ENCODE measurements at regions of chr18 and their contacts with region 1.

Region 1: GRCh38 chr18:54224379-54225014 is at the start of gene MBD2:
- DNase-seq: peak; percentile 98
- H3K4me3 ChIP-seq: peak within 1 kb of the TSS; percentile 63 to 79 (median 73)
- H3K27ac ChIP-seq: peak within 1 kb of the TSS; percentile 82
- H3K4me1 ChIP-seq: peaks cover 23% of the 10 kb centered on the region
- H3K27me3 ChIP-seq: no peaks in the 10 kb centered on the region
- CTCF ChIP-seq: peak in 1 of 2 donors; percentile 16
- POLR2A ChIP-seq: peak; percentile 55
- total RNA-seq, gene MBD2: 105 and 110 TPM in 2 replicates

Region 2: DNA sequence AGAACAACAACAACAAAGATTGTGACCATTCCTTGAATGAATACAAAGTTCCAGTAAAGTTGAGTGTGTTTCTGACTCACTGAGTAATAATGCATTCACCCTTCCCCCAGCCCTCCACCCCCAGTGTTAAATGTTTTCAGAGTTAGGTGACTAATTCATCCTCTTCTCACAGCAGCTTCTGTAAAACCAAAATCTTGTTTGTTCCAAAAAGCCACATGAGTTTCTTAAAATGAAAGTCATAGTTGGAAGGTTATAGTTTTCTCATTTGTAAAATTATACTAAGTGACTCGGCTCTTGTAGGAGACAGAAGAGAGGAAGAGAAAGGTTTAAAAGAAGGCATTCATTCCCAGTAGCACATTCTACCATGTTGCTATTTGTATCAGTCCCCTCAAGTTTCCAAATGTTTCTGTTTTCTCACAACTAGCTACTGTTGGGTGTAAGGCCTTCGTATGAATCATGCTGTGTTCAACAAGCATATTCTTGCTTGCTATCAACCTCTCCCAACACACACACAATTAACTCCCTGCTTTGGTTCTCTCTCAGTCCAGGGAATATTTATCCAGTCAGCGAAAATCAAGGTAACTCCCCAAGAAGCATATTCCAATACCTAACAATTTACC is 75.3 kb before region 1 on chr18:
- CTCF ChIA-PET with region 1: no interaction called
- POLR2A ChIA-PET with region 1: no interaction called
- dilution Hi-C with region 1: no loop called
- intact Hi-C with region 1: loop called (anchors 1 kb)
- DNase-seq: peak; percentile 94
- H3K4me3 ChIP-seq: peak overlapping the region in 1 of 3 experiments; percentile 50
- H3K27ac ChIP-seq: peak overlapping the region; percentile 98
- H3K4me1 ChIP-seq: peaks cover 26% of the 10 kb centered on the region
- H3K27me3 ChIP-seq: no peaks in the 10 kb centered on the region
- CTCF ChIP-seq: no peak
- POLR2A ChIP-seq: no peak

Region 3: GRCh38 chr18:54251606-54252407 is 27.3 kb after region 1 on chr18:
- CTCF ChIA-PET with region 1: interaction called, 4 read pairs
- POLR2A ChIA-PET with region 1: no interaction called
- dilution Hi-C with region 1: no loop called
- intact Hi-C with region 1: loop called (anchors 1 kb)
- DNase-seq: peak; percentile 46
- H3K4me3 ChIP-seq: no peak overlapping the region
- H3K27ac ChIP-seq: peak overlapping the region; percentile 41
- H3K4me1 ChIP-seq: peaks cover 20% of the 10 kb centered on the region
- H3K27me3 ChIP-seq: no peaks in the 10 kb centered on the region
- CTCF ChIP-seq: no peak
- POLR2A ChIP-seq: no peak

Region 4: GRCh38 chr18:54357660-54358494 is 133.4 kb after region 1 on chr18 and contains the starts of genes C18orf54 and STARD6:
- CTCF ChIA-PET with region 1: interaction called, 8 read pairs
- POLR2A ChIA-PET with region 1: no interaction called
- dilution Hi-C with region 1: no loop called
- intact Hi-C with region 1: loop called (anchors 1 kb)
- DNase-seq: peak; percentile 92
- H3K4me3 ChIP-seq: peak within 1 kb of the TSS; percentile 64 to 98 (median 79)
- H3K27ac ChIP-seq: peak within 1 kb of the TSS; percentile 51
- H3K4me1 ChIP-seq: peaks cover 11% of the 10 kb centered on the region
- H3K27me3 ChIP-seq: no peaks in the 10 kb centered on the region
- CTCF ChIP-seq: peak; percentile 22 to 23
- POLR2A ChIP-seq: peak; percentile 86
- total RNA-seq, gene C18orf54: 20.8 and 21.4 TPM in 2 replicates
- total RNA-seq, gene STARD6: not detected in 2 replicates

Region 5: DNA sequence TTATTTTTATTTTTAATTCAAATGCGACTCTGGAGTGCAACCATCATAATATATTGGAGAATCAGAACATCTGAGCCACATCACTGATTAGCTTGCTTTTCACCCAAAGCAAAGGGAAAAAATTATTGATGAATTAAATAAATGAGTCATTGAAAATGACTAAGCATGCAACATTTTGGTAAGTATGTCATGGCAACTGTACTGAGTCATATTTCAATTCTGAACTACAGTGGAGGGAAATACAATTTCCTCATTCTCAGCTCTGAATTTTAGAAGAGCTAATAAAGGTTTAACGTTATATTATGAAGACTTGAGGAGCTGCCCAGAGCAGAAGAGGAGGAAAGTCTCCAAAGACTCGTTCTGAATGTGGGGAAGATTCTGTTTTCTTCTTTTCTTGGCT is 824.4 kb after region 1 on chr18:
- CTCF ChIA-PET with region 1: no interaction called
- POLR2A ChIA-PET with region 1: interaction called, 10 read pairs
- dilution Hi-C with region 1: no loop called
- intact Hi-C with region 1: no loop called
- DNase-seq: peak; percentile 3
- H3K4me3 ChIP-seq: no peak overlapping the region
- H3K27ac ChIP-seq: no peak overlapping the region
- H3K4me1 ChIP-seq: no peaks in the 10 kb centered on the region
- H3K27me3 ChIP-seq: peaks cover 0 to 1% of the 10 kb centered on the region in 2 experiments
- CTCF ChIP-seq: no peak
- POLR2A ChIP-seq: no peak